IMR-90 (cell line): ENCODE measurements at regions of chr19 and their contacts with region 1.

Region 1: GRCh38 chr19:45250832-45251451 is at the start of gene MARK4:
- DNase-seq: peak; percentile 34
- ATAC-seq: peak; percentile 86
- H3K4me3 ChIP-seq: peak within 1 kb of the TSS; percentile 96
- H3K27ac ChIP-seq: peak within 1 kb of the TSS; percentile 79
- H3K4me1 ChIP-seq: peaks cover 18% of the 10 kb centered on the region
- H3K27me3 ChIP-seq: no peaks in the 10 kb centered on the region
- CTCF ChIP-seq: no peak
- POLR2A ChIP-seq: no peak
- RAD21 ChIP-seq: no peak
- total RNA-seq, gene MARK4: 8.1 and 11.3 TPM in 2 replicates

Region 2: DNA sequence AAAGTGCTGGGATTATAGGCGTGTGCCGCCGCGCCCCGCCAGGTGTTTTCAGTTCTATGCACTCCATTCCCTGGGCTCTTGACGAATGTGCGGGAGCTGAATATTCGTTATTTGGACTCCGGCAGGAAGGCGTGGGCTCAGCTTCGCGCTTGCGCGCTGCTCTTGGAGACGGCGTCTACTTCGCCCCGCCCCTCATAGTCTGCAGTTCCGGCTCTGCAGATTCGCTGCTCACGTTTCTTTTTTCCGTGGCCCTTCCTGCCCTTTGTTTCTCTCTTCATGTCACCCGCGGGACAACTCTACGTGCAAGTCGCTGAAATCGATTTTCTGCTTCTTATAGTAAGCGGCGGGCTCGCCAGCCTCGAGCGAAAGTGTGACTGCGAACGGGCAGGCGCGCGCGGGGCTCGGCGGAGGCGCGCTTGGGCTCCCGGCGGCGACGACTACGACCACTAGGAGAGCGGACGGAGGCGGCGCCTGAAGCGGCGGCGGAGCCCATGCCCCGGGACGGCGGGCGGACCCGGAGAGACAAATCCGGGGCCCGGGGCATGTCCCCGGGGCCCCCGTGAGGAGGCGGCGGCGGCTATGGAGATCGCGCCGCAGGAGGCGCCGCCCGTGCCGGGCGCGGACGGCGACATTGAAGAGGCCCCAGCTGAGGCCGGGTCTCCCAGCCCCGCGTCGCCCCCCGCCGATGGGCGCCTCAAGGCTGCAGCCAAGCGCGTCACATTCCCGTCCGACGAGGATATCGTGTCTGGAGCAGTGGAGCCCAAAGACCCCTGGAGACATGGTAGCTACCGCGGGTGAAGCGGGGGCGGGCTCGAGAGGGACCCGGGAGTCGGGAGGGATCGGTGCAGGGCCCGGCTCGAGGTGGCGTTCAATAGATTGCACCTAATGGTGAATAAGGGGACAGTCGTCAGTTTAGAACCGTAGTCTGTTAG is 157.9 kb before region 1 on chr19 and contains the start of gene PPP1R37:
- CTCF ChIA-PET with region 1: no interaction called
- POLR2A ChIA-PET with region 1: no interaction called
- dilution Hi-C with region 1: no loop called
- in situ Hi-C with region 1: no loop called
- intact Hi-C with region 1: loop called (anchors 2 kb)
- DNase-seq: peak; percentile 97
- ATAC-seq: peak; percentile 81
- H3K4me3 ChIP-seq: peak within 1 kb of the TSS; percentile 62
- H3K27ac ChIP-seq: peak within 1 kb of the TSS; percentile 98
- H3K4me1 ChIP-seq: peaks cover 15% of the 10 kb centered on the region
- H3K27me3 ChIP-seq: no peaks in the 10 kb centered on the region
- CTCF ChIP-seq: peak; percentile 36; the same call in 1 of the 2 replicates
- POLR2A ChIP-seq: 0 out of 2 replicates have a peak, but pooled peaks have one; percentile 51
- RAD21 ChIP-seq: 0 out of 2 replicates have a peak, but pooled peaks have one; percentile 2
- total RNA-seq, gene PPP1R37: 13.1 and 13.9 TPM in 2 replicates

Region 3: GRCh38 chr19:45161738-45162607 is 89.0 kb before region 1 on chr19:
- CTCF ChIA-PET with region 1: interaction called, 4 read pairs
- POLR2A ChIA-PET with region 1: no interaction called
- dilution Hi-C with region 1: no loop called
- in situ Hi-C with region 1: no loop called
- intact Hi-C with region 1: loop called (anchors 1 kb)
- DNase-seq: peak; percentile 28
- ATAC-seq: peak; percentile 84
- H3K4me3 ChIP-seq: no peak overlapping the region
- H3K27ac ChIP-seq: no peak overlapping the region
- H3K4me1 ChIP-seq: peaks cover 2% of the 10 kb centered on the region; the same call in 1 of the 2 replicates
- H3K27me3 ChIP-seq: peaks cover 22% of the 10 kb centered on the region
- CTCF ChIP-seq: peak; percentile 64
- POLR2A ChIP-seq: no peak
- RAD21 ChIP-seq: peak; percentile 67

Region 4: GRCh38 chr19:45178262-45179071 is 72.5 kb before region 1 on chr19 and contains the start of gene BLOC1S3:
- CTCF ChIA-PET with region 1: no interaction called
- POLR2A ChIA-PET with region 1: no interaction called
- dilution Hi-C with region 1: no loop called
- in situ Hi-C with region 1: no loop called
- intact Hi-C with region 1: no loop called
- DNase-seq: peak; percentile 100
- ATAC-seq: peak; percentile 94
- H3K4me3 ChIP-seq: peak within 1 kb of the TSS; percentile 79
- H3K27ac ChIP-seq: peak within 1 kb of the TSS; percentile 69
- H3K4me1 ChIP-seq: peaks cover 4% of the 10 kb centered on the region; the same call in 1 of the 2 replicates
- H3K27me3 ChIP-seq: no peaks in the 10 kb centered on the region
- CTCF ChIP-seq: peak; percentile 55
- POLR2A ChIP-seq: peak; percentile 75
- RAD21 ChIP-seq: 0 out of 2 replicates have a peak, but pooled peaks have one; percentile 3
- total RNA-seq, gene BLOC1S3: 0.83 and 1.1 TPM in 2 replicates

Region 5: GRCh38 chr19:45200568-45200994 is 50.4 kb before region 1 on chr19:
- CTCF ChIA-PET with region 1: no interaction called
- POLR2A ChIA-PET with region 1: no interaction called
- dilution Hi-C with region 1: no loop called
- in situ Hi-C with region 1: no loop called
- intact Hi-C with region 1: loop called (anchors 1 kb)
- DNase-seq: peak; percentile 57
- ATAC-seq: peak; percentile 86
- H3K4me3 ChIP-seq: no peak overlapping the region
- H3K27ac ChIP-seq: no peak overlapping the region
- H3K4me1 ChIP-seq: no peaks in the 10 kb centered on the region
- H3K27me3 ChIP-seq: no peaks in the 10 kb centered on the region
- CTCF ChIP-seq: peak; percentile 53
- POLR2A ChIP-seq: no peak
- RAD21 ChIP-seq: peak; percentile 68

Region 6: GRCh38 chr19:45340232-45340898 is 89.4 kb after region 1 on chr19 and contains the start of gene KLC3:
- CTCF ChIA-PET with region 1: no interaction called
- POLR2A ChIA-PET with region 1: no interaction called
- dilution Hi-C with region 1: no loop called
- in situ Hi-C with region 1: no loop called
- intact Hi-C with region 1: loop called (anchors 5 kb)
- DNase-seq: no peak
- ATAC-seq: no peak
- H3K4me3 ChIP-seq: no peak within 1 kb of the TSS
- H3K27ac ChIP-seq: no peak within 1 kb of the TSS
- H3K4me1 ChIP-seq: no peaks in the 10 kb centered on the region
- H3K27me3 ChIP-seq: peaks cover 17% of the 10 kb centered on the region
- CTCF ChIP-seq: no peak
- POLR2A ChIP-seq: no peak
- RAD21 ChIP-seq: no peak
- total RNA-seq, gene KLC3: under 0.01 and 0.18 TPM in 2 replicates

Region 7: DNA sequence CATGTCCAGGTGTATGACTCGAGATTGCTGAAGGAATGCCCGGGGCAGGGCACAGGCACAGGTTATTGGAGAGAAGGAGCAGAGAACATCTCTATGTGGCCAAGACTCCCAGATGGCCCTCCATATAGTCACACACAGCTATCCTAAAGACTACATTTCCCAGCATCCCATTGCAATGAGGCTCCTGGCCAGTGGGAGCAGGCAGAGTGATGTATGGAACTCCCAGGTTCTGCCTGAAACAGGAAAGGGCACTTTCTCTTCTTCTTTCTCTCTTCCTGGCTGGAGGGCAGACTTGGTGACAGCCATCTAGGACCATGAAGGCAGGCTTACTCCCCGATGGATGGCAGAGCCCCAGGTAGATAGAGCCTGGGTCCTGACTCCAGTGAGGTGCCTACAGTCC is 140.4 kb after region 1 on chr19:
- CTCF ChIA-PET with region 1: no interaction called
- POLR2A ChIA-PET with region 1: no interaction called
- dilution Hi-C with region 1: no loop called
- in situ Hi-C with region 1: no loop called
- intact Hi-C with region 1: no loop called
- DNase-seq: peak; percentile 18
- ATAC-seq: peak; percentile 91
- H3K4me3 ChIP-seq: no peak overlapping the region
- H3K27ac ChIP-seq: no peak overlapping the region
- H3K4me1 ChIP-seq: no peaks in the 10 kb centered on the region
- H3K27me3 ChIP-seq: no peaks in the 10 kb centered on the region
- CTCF ChIP-seq: no peak
- POLR2A ChIP-seq: no peak
- RAD21 ChIP-seq: no peak